ENCODE measurements at regions of chr12 and their contacts with region 1.

Region 1: GRCh38 chr12:46667551-46667950 is 158.2 kb downstream of the SLC38A4 start:
- DNase-seq: no peak
- H3K4me3 Mint-ChIP-seq: no peak overlapping the region
- H3K27ac Mint-ChIP-seq: no peak overlapping the region
- H3K4me1 Mint-ChIP-seq: peaks cover 29% of the 10 kb centered on the region
- H3K27me3 Mint-ChIP-seq: no peaks in the 10 kb centered on the region
- CTCF ChIP-seq: no peak

Region 2: DNA sequence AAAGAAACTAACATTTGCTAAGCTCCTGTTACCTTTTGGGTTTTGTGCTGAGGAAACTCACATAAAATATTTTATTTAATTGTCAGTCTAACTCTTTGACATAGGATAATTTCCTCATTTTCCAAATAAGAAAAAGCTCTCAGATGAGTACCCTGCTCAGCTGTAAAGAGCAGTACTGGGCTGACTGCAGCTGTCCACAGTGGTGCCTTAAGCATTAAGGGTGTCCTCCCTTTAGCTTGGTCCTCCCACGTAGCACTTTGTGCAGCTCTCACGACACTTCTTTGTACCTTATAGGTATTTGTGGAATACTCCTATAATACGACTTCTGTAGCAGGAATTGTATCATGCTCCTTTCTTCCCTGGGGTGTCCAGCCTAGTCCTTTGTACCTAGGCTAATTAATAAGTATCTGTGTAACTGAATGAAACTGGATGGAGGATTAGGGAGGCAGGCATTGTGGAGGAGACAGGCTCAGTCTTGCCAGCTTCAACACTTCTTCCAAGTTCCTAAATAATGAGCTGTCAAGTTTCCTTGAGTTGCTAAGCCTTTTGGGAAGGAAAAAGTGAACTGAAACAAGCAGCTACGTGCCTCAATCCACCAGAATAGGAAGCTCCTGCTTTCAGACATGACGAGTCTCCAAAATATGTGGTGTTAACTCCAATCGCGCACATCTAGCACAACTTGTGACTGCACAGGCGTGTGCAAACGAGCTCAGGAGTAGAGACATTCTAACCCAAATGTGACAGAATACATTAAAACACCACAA is 35.2 kb after region 1 on chr12:
- CTCF ChIA-PET with region 1: interaction called, 3 read pairs
- POLR2A ChIA-PET with region 1: interaction called, 12 read pairs
- intact Hi-C with region 1: no loop called
- DNase-seq: peak; percentile 94
- H3K4me3 Mint-ChIP-seq: peak overlapping the region; percentile 64
- H3K27ac Mint-ChIP-seq: peak overlapping the region; percentile 93
- H3K4me1 Mint-ChIP-seq: peaks cover 30% of the 10 kb centered on the region
- H3K27me3 Mint-ChIP-seq: no peaks in the 10 kb centered on the region
- CTCF ChIP-seq: no peak

Measured in MCF 10A (cell line).